Activated CD4-positive, alpha-beta T cell treated with anti-CD3 and anti-CD28 coated beads for 36 hours (primary cell): ENCODE measurements at regions of chr11 and their contacts with region 1.

Region 1: GRCh38 chr11:47407746-47408590 is at the start of gene SLC39A13:
- DNase-seq: peak; percentile 95
- ATAC-seq: peak; percentile 91
- H3K4me3 Mint-ChIP-seq: peak within 1 kb of the TSS; percentile 89
- H3K27ac Mint-ChIP-seq: peak within 1 kb of the TSS; percentile 94
- H3K4me1 Mint-ChIP-seq: peaks cover 16% of the 10 kb centered on the region
- H3K27me3 Mint-ChIP-seq: no peaks in the 10 kb centered on the region
- total RNA-seq, gene SLC39A13: 8.6 to 10.7 TPM

Region 2: DNA sequence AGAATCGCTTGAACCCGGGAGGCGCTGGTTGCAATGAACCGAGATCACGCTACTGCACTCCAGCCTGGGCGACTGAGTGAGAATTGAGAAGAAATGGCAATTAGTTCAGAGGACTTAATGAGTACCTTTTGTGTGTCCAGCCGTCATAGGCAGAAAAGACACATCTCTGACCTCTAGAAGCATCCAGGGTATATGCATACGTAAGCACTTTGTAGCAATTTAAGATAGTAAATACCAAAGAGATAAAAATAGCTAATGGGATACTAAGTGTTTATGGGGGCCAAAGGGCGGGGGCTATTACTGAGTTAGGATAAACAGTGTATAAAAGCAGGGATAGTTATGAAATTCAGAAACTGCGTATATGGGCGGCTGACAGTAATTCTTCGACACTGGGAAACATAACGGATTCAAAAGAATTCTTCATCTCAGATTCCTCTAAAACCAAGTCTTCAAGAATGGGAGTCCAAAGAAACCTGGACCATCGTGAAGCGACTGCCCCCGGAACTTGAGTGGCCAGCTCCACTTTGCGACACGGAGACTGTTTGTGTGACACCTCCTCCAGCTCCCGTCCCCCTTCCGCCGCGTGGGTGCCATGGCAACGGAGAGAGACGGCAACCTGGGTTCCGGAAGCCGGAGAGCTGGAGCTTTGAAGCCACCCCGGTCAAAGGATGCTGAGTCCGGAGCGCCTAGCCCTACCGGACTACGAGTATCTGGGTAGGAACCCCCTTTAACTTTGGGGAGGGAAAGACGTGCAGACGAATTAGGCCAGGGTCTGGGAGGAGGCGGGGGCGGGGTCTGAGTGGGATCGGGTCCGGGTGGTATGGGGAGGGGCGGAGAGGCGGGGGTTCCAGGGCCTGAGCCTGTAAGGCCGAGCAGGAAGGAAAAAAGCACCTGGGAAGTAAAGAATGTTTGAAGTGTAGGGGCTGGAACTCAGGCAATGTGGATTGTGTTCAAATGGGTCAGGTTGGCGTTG is 471.5 kb before region 1 on chr11 and contains the start of gene CSTPP1:
- CTCF ChIA-PET with region 1: no interaction called
- POLR2A ChIA-PET with region 1: no interaction called
- intact Hi-C with region 1: loop called in 1 of 2 experiments (anchors 10 kb)
- DNase-seq: peak; percentile 97
- ATAC-seq: peak; percentile 96
- H3K4me3 Mint-ChIP-seq: peak within 1 kb of the TSS; percentile 86
- H3K27ac Mint-ChIP-seq: peak within 1 kb of the TSS; percentile 88
- H3K4me1 Mint-ChIP-seq: peaks cover 16% of the 10 kb centered on the region
- H3K27me3 Mint-ChIP-seq: peaks cover 5% of the 10 kb centered on the region
- total RNA-seq, gene CSTPP1: 17.9 to 18.6 TPM

Region 3: GRCh38 chr11:47269002-47269828 is 138.8 kb before region 1 on chr11:
- CTCF ChIA-PET with region 1: interaction called, 6 read pairs
- POLR2A ChIA-PET with region 1: no interaction called
- intact Hi-C with region 1: loop called (anchors 1 kb)
- DNase-seq: peak; percentile 93
- ATAC-seq: peak; percentile 61
- H3K4me3 Mint-ChIP-seq: peak overlapping the region; percentile 76
- H3K27ac Mint-ChIP-seq: peak overlapping the region; percentile 98
- H3K4me1 Mint-ChIP-seq: peaks cover 60% of the 10 kb centered on the region
- H3K27me3 Mint-ChIP-seq: no peaks in the 10 kb centered on the region

Region 4: GRCh38 chr11:47394322-47395222 is 13.4 kb before region 1 on chr11:
- CTCF ChIA-PET with region 1: interaction called, 18 read pairs
- POLR2A ChIA-PET with region 1: no interaction called
- intact Hi-C with region 1: loop called in 1 of 2 experiments (anchors 2 kb)
- DNase-seq: peak; percentile 80
- ATAC-seq: peak; percentile 89
- H3K4me3 Mint-ChIP-seq: peak overlapping the region; percentile 23
- H3K27ac Mint-ChIP-seq: peak overlapping the region; percentile 95
- H3K4me1 Mint-ChIP-seq: peaks cover 23% of the 10 kb centered on the region
- H3K27me3 Mint-ChIP-seq: no peaks in the 10 kb centered on the region

Region 5: GRCh38 chr11:47642099-47642855 is 234.3 kb after region 1 on chr11 and contains the start of gene MTCH2:
- CTCF ChIA-PET with region 1: no interaction called
- POLR2A ChIA-PET with region 1: no interaction called
- intact Hi-C with region 1: loop called in 1 of 2 experiments (anchors 1 kb)
- DNase-seq: peak; percentile 98
- ATAC-seq: peak; percentile 94
- H3K4me3 Mint-ChIP-seq: peak within 1 kb of the TSS; percentile 99
- H3K27ac Mint-ChIP-seq: peak within 1 kb of the TSS; percentile 96
- H3K4me1 Mint-ChIP-seq: peaks cover 25% of the 10 kb centered on the region
- H3K27me3 Mint-ChIP-seq: no peaks in the 10 kb centered on the region
- total RNA-seq, gene MTCH2: 94.8 to 138 TPM